PC-9 (cell line): ENCODE measurements at regions of chr7 and their contacts with region 1.

Region 1: GRCh38 chr7:80787721-80788120 is 131.1 kb downstream of the SEMA3C start:
- DNase-seq: no peak
- H3K4me3 ChIP-seq: no peak overlapping the region
- H3K27ac ChIP-seq: no peak overlapping the region
- H3K4me1 ChIP-seq: no peaks in the 10 kb centered on the region
- H3K27me3 ChIP-seq: no peaks in the 10 kb centered on the region
- CTCF ChIP-seq: no peak

Region 2: DNA sequence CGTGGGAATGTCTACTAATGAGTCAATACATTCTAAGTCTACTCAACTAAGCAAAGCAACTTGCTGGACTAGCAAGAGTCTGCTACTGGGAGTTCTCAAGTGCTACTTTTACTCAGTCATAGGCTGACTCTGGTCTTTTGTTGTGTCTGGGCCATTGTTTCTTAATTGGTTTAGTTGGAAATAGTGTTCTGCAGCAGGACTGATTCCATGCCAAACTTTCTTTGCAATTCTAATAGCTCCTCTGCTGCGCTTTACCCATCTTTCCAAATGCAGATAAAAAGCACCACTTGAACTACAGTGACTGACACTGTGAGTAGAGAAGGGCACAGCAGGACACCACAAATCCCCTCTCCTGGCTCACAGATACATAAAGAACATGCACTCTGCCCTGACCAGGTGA is 23.6 kb before region 1 on chr7:
- CTCF ChIA-PET with region 1: no interaction called
- POLR2A ChIA-PET with region 1: no interaction called
- intact Hi-C with region 1: loop called (anchors 1 kb)
- DNase-seq: no peak
- H3K4me3 ChIP-seq: no peak overlapping the region
- H3K27ac ChIP-seq: no peak overlapping the region
- H3K4me1 ChIP-seq: no peaks in the 10 kb centered on the region
- H3K27me3 ChIP-seq: no peaks in the 10 kb centered on the region
- CTCF ChIP-seq: no peak

Region 3: DNA sequence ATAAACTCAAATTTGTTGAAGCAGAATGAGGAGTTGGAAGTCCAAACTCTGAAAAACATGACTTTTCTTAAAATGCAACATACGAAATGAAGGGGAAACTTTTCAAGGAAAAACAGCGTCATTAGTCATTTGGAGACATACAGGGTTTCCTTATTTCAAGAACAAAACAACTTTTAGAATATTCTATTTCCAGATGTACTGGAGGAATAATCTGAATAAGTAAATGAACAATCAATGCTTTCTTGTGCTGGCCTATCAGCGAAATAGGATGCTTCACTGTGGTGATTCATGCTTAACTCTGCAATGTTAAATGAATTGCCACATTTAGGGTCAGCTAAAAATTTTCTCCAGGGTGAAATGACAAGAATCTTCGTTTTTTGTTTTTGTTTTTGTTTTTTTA is 16.9 kb after region 1 on chr7:
- CTCF ChIA-PET with region 1: no interaction called
- POLR2A ChIA-PET with region 1: no interaction called
- intact Hi-C with region 1: no loop called
- DNase-seq: no peak
- H3K4me3 ChIP-seq: no peak overlapping the region
- H3K27ac ChIP-seq: no peak overlapping the region
- H3K4me1 ChIP-seq: no peaks in the 10 kb centered on the region
- H3K27me3 ChIP-seq: no peaks in the 10 kb centered on the region
- CTCF ChIP-seq: no peak

Region 4: GRCh38 chr7:81140775-81141174 is 353.1 kb after region 1 on chr7:
- CTCF ChIA-PET with region 1: no interaction called
- POLR2A ChIA-PET with region 1: no interaction called
- intact Hi-C with region 1: no loop called
- DNase-seq: no peak
- H3K4me3 ChIP-seq: no peak overlapping the region
- H3K27ac ChIP-seq: no peak overlapping the region
- H3K4me1 ChIP-seq: no peaks in the 10 kb centered on the region
- H3K27me3 ChIP-seq: no peaks in the 10 kb centered on the region
- CTCF ChIP-seq: no peak